Dendritic cell treated with granulocyte-macrophage colony-stimulating factor and Interleukin-4, amounts not matched to agents 40 ng/mL and 50 ng/mL, for 4 days (primary cell): ENCODE measurements at regions of chr17 and their contacts with region 1.

Region 1: DNA sequence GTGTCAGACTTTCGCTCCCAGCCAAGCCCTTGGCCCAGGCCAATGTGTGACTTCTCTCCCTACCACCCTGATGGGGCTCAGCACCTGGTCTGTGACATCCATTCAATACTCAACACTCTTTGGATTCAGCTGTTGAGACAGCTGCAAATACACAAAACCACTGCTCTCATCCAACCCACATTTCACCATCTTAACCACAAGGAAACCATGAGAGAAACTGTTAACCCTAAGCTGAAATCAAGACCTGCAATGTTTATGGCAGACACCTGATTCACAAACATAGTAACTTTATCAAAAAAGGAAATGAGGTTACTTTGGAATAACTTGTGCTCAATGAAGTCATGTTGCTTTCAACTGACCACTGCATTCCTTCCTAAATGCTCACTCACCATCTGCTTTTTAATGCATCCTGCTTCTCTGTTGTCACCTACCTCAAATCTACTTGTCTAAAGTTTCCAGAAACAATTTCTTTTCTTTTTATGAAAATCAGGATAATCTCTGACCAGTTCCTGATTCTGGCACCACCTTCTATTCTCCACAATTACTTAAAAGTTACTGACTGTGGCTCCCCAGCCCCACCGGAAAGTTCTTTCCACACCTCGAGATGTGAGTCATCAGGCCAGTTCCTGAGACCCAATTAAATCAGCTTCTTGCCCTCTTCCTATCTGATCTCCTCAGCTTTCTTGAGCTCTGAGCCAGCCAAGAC is 88.2 kb downstream of the NOG start:
- H3K4me3 Mint-ChIP-seq: no peak overlapping the region
- H3K27ac Mint-ChIP-seq: no peak overlapping the region
- H3K4me1 Mint-ChIP-seq: peaks cover 10% of the 10 kb centered on the region
- H3K27me3 Mint-ChIP-seq: peaks cover 33% of the 10 kb centered on the region

Region 2: GRCh38 chr17:56499799-56500388 is 181.8 kb before region 1 on chr17:
- intact Hi-C with region 1: loop called (anchors 10 kb)
- H3K4me3 Mint-ChIP-seq: no peak overlapping the region
- H3K27ac Mint-ChIP-seq: no peak overlapping the region
- H3K4me1 Mint-ChIP-seq: no peaks in the 10 kb centered on the region
- H3K27me3 Mint-ChIP-seq: no peaks in the 10 kb centered on the region

Region 3: GRCh38 chr17:56597495-56597990 is 84.2 kb before region 1 on chr17:
- intact Hi-C with region 1: no loop called
- H3K4me3 Mint-ChIP-seq: no peak overlapping the region
- H3K27ac Mint-ChIP-seq: no peak overlapping the region
- H3K4me1 Mint-ChIP-seq: peaks cover 35% of the 10 kb centered on the region
- H3K27me3 Mint-ChIP-seq: peaks cover 54% of the 10 kb centered on the region

Region 4: GRCh38 chr17:56699186-56699895 is 17.6 kb after region 1 on chr17:
- intact Hi-C with region 1: no loop called
- H3K4me3 Mint-ChIP-seq: no peak overlapping the region
- H3K27ac Mint-ChIP-seq: no peak overlapping the region
- H3K4me1 Mint-ChIP-seq: peaks cover 5% of the 10 kb centered on the region
- H3K27me3 Mint-ChIP-seq: no peaks in the 10 kb centered on the region

Region 5: GRCh38 chr17:58303971-58304725 is 1622.4 kb after region 1 on chr17:
- intact Hi-C with region 1: no loop called
- H3K4me3 Mint-ChIP-seq: no peak overlapping the region
- H3K27ac Mint-ChIP-seq: peak overlapping the region; percentile 27
- H3K4me1 Mint-ChIP-seq: peaks cover 79% of the 10 kb centered on the region
- H3K27me3 Mint-ChIP-seq: peaks cover 27% of the 10 kb centered on the region